ENCODE measurements at regions of chr21 and their contacts with region 1.

Region 1: GRCh38 chr21:29024474-29025327 is at the start of gene USP16:
- DNase-seq: peak; percentile 91 to 95
- H3K4me3 ChIP-seq: peak within 1 kb of the TSS; percentile 59
- H3K27ac ChIP-seq: peak within 1 kb of the TSS; percentile 84
- H3K4me1 ChIP-seq: peaks cover 11% of the 10 kb centered on the region
- H3K27me3 ChIP-seq: no peaks in the 10 kb centered on the region
- CTCF ChIP-seq: no peak
- total RNA-seq, gene USP16: 18.6 and 24.6 TPM in 2 replicates

Region 2: GRCh38 chr21:28177124-28177523 is 847.6 kb before region 1 on chr21:
- CTCF ChIA-PET with region 1: no interaction called
- POLR2A ChIA-PET with region 1: no interaction called
- intact Hi-C with region 1: no loop called
- DNase-seq: no peak
- H3K4me3 ChIP-seq: no peak overlapping the region
- H3K27ac ChIP-seq: no peak overlapping the region
- H3K4me1 ChIP-seq: no peaks in the 10 kb centered on the region
- H3K27me3 ChIP-seq: no peaks in the 10 kb centered on the region
- CTCF ChIP-seq: no peak

Region 3: GRCh38 chr21:28871388-28872010 is 153.2 kb before region 1 on chr21:
- CTCF ChIA-PET with region 1: no interaction called
- POLR2A ChIA-PET with region 1: no interaction called
- intact Hi-C with region 1: no loop called
- DNase-seq: no peak
- H3K4me3 ChIP-seq: no peak overlapping the region
- H3K27ac ChIP-seq: no peak overlapping the region
- H3K4me1 ChIP-seq: no peaks in the 10 kb centered on the region
- H3K27me3 ChIP-seq: no peaks in the 10 kb centered on the region
- CTCF ChIP-seq: no peak

Region 4: DNA sequence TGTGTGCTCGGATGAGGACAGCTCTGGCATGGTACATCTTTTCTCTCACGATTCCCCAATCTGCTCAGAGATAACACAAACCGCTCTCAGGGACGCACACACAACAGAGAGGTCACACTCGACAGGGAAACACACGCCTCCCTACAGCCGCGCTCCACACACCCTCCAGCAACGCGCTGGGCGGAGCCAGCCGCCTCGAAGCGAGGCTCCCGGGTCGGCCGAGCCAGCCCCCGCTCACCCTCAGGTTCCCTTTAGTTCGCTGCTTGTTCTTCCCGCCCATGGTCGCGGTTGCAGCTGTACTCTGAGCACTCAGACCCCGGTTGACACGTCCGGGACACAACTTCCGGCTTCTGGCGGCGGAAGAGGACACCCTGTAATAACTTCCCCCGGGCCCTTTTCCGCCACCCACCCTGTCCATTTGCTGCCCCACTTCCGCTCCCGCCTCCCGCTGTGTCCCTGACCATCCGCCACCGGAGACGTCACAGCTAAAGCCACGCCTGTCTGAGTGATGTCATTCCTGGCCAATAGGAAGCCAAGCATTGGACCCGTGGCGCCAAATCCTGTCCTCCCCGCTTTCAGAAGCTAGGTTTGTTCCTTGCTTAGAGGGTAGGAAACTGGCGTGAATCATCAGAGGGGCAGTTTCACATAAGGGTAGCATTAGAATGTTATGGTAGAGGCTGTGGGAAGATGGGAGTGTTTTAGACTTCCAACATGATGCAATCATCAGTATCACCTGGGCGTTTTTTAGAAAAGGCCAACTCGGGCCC is 32.0 kb before region 1 on chr21 and contains the start of gene LTN1:
- CTCF ChIA-PET with region 1: no interaction called
- POLR2A ChIA-PET with region 1: interaction called, 8 read pairs
- intact Hi-C with region 1: loop called (anchors 2 kb)
- DNase-seq: peak; percentile 95 to 96
- H3K4me3 ChIP-seq: peak within 1 kb of the TSS; percentile 83
- H3K27ac ChIP-seq: peak within 1 kb of the TSS; percentile 97
- H3K4me1 ChIP-seq: peaks cover 17% of the 10 kb centered on the region
- H3K27me3 ChIP-seq: no peaks in the 10 kb centered on the region
- CTCF ChIP-seq: no peak
- total RNA-seq, gene LTN1: 14.9 and 18.7 TPM in 2 replicates

Region 5: DNA sequence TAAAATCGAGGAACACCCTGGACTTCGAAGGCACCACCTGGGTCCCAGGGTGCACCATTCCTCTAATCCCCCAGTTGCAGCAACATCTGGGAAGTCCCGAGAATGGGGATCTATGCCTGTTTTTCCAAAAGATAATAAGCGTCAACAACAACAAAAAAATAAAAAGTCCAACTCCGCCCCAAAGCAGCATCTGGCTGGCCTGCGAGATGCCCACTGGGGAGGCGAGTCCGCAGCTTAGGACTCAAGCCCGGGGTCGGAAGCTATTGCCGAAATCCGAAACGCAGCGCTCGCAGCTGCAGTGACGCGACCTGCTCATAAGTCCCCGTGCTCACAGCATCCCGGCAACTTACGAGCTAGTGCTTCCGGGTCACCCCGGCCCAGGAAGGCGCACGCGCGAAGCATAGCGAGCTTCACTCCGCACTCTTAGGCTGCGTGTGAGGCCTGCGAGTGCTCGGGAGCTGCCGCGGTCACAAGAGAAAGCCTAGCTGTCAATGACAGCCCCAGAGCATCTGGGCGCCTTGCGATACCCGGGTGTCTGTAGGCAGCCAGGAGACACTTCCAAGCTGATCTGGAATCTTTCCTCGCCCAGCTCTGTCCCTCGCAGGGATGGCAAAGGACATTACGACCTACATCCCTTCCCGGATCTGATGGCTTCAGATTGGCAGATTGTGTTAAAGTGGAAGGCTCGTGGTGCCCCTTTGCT is 22.1 kb before region 1 on chr21:
- CTCF ChIA-PET with region 1: no interaction called
- POLR2A ChIA-PET with region 1: interaction called, 19 read pairs
- intact Hi-C with region 1: loop called (anchors 1 kb)
- DNase-seq: peak; percentile 89
- H3K4me3 ChIP-seq: peak overlapping the region; percentile 73
- H3K27ac ChIP-seq: peak overlapping the region; percentile 78
- H3K4me1 ChIP-seq: peaks cover 5% of the 10 kb centered on the region
- H3K27me3 ChIP-seq: no peaks in the 10 kb centered on the region
- CTCF ChIP-seq: no peak

Region 6: DNA sequence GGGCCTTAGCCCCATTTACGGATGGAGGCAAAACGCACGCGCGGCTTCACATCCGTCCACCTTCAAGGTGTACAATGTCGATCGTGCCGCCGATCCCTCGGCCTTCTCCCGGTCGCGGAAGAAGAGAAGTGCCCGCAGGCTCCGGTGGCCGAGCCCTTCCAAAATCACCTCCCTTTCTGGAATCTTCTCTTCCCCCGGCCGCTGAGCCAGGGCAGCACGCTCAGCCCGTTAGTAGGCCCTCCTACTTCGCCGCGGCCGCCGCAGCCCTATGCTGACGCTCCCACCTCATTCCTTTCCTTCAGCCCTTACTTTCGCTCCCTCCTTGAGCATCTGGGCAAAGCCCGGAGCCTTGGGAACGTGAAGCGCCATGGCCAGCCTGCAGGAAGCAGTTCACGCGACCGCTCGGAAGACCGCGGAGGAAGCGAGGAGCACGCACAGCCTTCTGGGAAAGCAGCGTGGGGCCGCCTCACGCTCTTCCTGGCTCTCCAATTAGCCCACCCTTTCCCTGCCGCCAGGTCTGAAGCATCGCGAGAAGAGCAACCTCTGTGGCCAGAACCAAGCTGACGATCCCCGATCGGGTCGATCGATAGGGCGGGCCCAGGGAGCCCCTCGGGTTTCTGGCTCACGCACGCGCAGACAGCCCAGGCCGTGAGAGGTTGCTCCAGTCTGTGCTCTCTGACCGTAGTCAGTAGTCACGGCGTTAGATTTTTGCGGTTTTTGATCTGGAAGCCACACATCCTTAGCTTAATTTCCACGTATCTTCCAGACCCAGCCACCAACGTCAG is 48.7 kb after region 1 on chr21 and contains the start of gene CCT8:
- CTCF ChIA-PET with region 1: no interaction called
- POLR2A ChIA-PET with region 1: interaction called, 6 read pairs
- intact Hi-C with region 1: loop called (anchors 5 kb)
- DNase-seq: peak; percentile 94 to 96
- H3K4me3 ChIP-seq: peak within 1 kb of the TSS; percentile 91
- H3K27ac ChIP-seq: peak within 1 kb of the TSS; percentile 74
- H3K4me1 ChIP-seq: peaks cover 24% of the 10 kb centered on the region; the same call in 1 of the 2 replicates
- H3K27me3 ChIP-seq: no peaks in the 10 kb centered on the region
- CTCF ChIP-seq: no peak
- total RNA-seq, gene CCT8: 123 and 128 TPM in 2 replicates